GM12878 (cell line): ENCODE measurements at regions of chr22 and their contacts with region 1.

Region 1: DNA sequence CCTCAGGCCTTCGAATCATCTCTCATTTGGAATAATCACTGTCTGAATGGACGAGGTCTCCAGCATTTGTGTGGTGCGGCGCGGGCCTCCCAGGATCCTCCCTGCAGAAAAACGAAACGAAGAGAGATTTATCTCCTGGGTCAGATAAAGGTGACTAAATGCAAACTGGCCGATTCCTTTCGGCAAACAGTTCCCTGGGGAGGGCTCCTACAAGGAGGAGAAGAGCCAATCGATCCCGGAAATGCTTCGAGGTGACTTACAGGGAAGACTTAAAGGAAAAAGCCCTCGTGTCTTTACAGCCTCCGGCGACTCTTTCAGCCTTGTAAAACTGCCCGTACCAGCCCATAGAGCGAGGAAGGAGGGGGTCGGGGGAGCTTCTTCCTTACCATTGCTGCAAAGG is 126.5 kb downstream of the MIAT start:
- DNase-seq: no peak
- ATAC-seq: no peak
- H3K4me3 ChIP-seq: no peak overlapping the region
- H3K27ac ChIP-seq: no peak overlapping the region
- H3K4me1 ChIP-seq: peaks cover 16% of the 10 kb centered on the region
- H3K27me3 ChIP-seq: no peaks in the 10 kb centered on the region
- CTCF ChIP-seq: no peak
- EP300 ChIP-seq: no peak
- POLR2A ChIP-seq: no peak
- RAD21 ChIP-seq: no peak

Region 2: GRCh38 chr22:25447686-25448434 is 1336.0 kb before region 1 on chr22:
- CTCF ChIA-PET with region 1: no interaction called
- POLR2A ChIA-PET with region 1: no interaction called
- RAD21 ChIA-PET with region 1: no interaction called
- SMC1A ChIA-PET with region 1: no interaction called
- in situ Hi-C with region 1: no loop called
- intact Hi-C with region 1: no loop called
- DNase-seq: peak; percentile 84
- ATAC-seq: peak; percentile 92
- H3K4me3 ChIP-seq: peak overlapping the region; percentile 83
- H3K27ac ChIP-seq: peak overlapping the region; percentile 70
- H3K4me1 ChIP-seq: no peaks in the 10 kb centered on the region; the same call in 1 of the 2 replicates
- H3K27me3 ChIP-seq: no peaks in the 10 kb centered on the region
- CTCF ChIP-seq: peak; percentile 85 to 97 (median 93)
- EP300 ChIP-seq: no peak
- POLR2A ChIP-seq: peak; percentile 64
- RAD21 ChIP-seq: peak; percentile 42

Region 3: GRCh38 chr22:26734339-26735018 is 49.4 kb before region 1 on chr22:
- CTCF ChIA-PET with region 1: no interaction called
- POLR2A ChIA-PET with region 1: no interaction called
- RAD21 ChIA-PET with region 1: no interaction called
- SMC1A ChIA-PET with region 1: no interaction called
- in situ Hi-C with region 1: loop called (anchors 5 kb)
- intact Hi-C with region 1: no loop called
- DNase-seq: no peak
- ATAC-seq: no peak
- H3K4me3 ChIP-seq: no peak overlapping the region
- H3K27ac ChIP-seq: no peak overlapping the region
- H3K4me1 ChIP-seq: no peaks in the 10 kb centered on the region
- H3K27me3 ChIP-seq: no peaks in the 10 kb centered on the region
- CTCF ChIP-seq: no peak
- EP300 ChIP-seq: no peak
- POLR2A ChIP-seq: no peak
- RAD21 ChIP-seq: no peak